ENCODE measurements at regions of chr22 and their contacts with region 1.

Region 1: DNA sequence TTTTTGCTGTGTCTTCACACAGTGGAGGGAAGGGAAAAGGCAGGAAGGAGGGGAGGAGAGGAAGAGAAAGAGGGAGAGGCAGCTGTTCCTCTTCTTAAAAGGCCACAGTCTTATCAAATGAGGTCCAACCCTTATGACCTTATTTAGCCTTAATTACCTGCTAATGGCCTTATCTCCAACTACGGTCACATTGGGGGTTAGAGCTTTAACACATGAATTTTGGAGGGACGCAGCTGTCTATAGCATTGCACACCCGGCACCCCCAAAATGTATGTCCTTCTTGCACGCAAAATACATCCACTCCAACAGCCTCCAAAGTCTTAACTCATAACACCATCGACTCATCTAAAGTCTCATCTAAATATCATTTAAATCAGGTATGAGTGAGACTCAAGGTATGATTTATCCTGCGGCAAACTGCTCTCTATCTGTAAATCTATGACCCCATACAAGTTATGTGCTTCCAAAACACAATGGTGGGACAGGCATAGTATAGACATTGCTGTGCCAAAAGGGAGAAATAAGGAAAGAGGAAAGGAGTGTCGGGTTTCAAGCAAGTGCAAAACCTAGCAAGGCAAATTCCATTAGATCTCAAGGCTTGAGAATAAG is 45.0 kb upstream of the ASPHD2 start:
- DNase-seq: no peak
- H3K4me3 ChIP-seq: no peak overlapping the region
- H3K27ac ChIP-seq: no peak overlapping the region
- H3K4me1 ChIP-seq: no peaks in the 10 kb centered on the region
- H3K27me3 ChIP-seq: peaks cover 0 to 22% of the 10 kb centered on the region in 2 donors
- CTCF ChIP-seq: no peak
- POLR2A ChIP-seq: no peak

Region 2: DNA sequence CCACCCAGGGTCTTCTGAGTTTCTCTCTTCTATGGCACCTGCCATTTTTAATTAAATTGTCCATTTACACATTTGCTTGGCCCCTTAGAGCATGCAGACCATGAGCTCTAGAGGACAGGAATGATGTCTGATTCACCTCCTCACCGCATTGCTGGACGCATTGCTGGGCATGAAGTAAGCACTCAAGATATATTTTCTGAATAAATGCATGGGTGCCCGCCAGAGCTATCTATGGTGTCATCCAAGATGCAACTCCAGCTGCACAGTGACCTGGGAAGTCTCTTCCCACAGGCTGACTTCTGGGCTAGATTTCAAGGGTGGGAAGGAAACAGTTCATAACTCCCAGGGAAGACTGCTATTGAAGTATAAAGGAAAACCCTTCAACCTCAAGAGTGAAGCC is 21.6 kb before region 1 on chr22:
- intact Hi-C with region 1: loop called (anchors 1 kb)
- DNase-seq: no peak
- H3K4me3 ChIP-seq: no peak overlapping the region
- H3K27ac ChIP-seq: no peak overlapping the region
- H3K4me1 ChIP-seq: no peaks in the 10 kb centered on the region
- H3K27me3 ChIP-seq: peaks cover 0 to 3% of the 10 kb centered on the region in 2 donors
- CTCF ChIP-seq: no peak
- POLR2A ChIP-seq: no peak

Region 3: DNA sequence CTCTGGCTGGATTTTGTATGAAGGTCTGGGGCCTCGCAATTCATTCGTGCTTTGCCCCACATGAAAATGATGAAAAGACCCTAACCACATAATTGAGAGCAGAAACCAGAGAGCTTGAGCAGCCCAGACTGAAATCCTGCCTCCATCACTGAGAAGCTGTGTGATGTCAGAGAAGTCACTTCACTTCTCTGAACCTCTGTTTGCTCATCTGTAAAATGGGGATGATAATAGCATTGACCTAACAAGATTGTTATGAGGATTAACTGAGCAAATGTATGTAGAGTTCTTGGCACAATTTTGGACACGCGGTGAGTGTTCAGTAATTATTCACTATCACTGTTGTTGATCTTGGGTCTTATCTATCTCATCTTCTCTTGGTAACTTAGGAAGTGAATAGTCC is 11.2 kb before region 1 on chr22:
- intact Hi-C with region 1: no loop called
- DNase-seq: no peak
- H3K4me3 ChIP-seq: no peak overlapping the region
- H3K27ac ChIP-seq: no peak overlapping the region
- H3K4me1 ChIP-seq: no peaks in the 10 kb centered on the region
- H3K27me3 ChIP-seq: peaks cover 2 to 23% of the 10 kb centered on the region in 2 donors
- CTCF ChIP-seq: no peak
- POLR2A ChIP-seq: no peak

Region 4: DNA sequence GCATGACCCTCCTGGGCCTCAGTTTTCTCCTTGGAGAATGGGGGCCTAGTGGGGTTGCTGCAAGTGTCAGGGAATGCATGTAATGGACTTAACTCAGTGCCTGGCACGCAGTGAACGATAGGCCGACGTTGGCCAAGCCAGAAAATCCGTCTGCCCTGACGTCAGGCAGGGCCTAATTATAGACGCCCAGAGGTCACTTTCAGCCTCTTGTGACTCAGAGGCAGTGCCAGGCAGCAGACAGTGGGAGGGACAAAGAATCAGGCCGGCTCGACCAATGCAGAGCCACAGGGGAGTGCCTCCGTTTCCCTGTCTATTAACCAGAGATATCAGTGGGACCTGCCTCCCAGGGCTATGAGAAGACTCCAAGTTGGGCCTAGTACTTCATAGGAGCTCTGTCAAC is 1302.5 kb after region 1 on chr22:
- intact Hi-C with region 1: no loop called
- DNase-seq: peak; percentile 24 to 58
- H3K4me3 ChIP-seq: no peak overlapping the region
- H3K27ac ChIP-seq: no peak overlapping the region
- H3K4me1 ChIP-seq: no peaks in the 10 kb centered on the region
- H3K27me3 ChIP-seq: no peaks in the 10 kb centered on the region
- CTCF ChIP-seq: no peak
- POLR2A ChIP-seq: no peak